CD4-positive, alpha-beta memory T cell (primary cell): ENCODE measurements at regions of chr5 and their contacts with region 1.

Region 1: DNA sequence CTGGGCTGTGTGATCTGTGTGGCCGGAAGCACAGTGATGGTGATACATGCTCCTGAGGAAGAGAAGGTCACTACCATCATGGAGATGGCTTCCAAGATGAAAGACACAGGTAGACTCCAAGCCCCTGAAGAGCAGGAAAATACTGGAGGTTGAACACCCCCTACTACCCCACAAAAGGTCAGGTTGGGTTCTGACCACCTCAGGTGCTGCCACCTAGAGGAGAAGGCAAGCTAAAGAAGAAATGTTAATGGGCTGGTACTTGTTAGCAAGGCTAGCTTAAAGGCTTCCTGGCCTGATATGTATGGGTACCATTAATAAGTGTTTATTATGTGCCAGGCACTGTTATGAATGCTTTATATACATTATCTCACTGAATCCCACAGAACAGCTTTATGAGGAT is 11.7 kb downstream of the NIPAL4 start:
- DNase-seq: no peak
- H3K4me3 ChIP-seq: no peak overlapping the region
- H3K4me3 Mint-ChIP-seq: no peak overlapping the region
- H3K27ac ChIP-seq: no peak overlapping the region
- H3K27ac Mint-ChIP-seq: no peak overlapping the region
- H3K4me1 ChIP-seq: no peaks in the 10 kb centered on the region
- H3K4me1 Mint-ChIP-seq: peaks cover under 1 to 4% (median 4%) of the 10 kb centered on the region in 4 donors
- H3K27me3 ChIP-seq: no peaks in the 10 kb centered on the region
- H3K27me3 Mint-ChIP-seq: no peaks in the 10 kb centered on the region

Region 2: DNA sequence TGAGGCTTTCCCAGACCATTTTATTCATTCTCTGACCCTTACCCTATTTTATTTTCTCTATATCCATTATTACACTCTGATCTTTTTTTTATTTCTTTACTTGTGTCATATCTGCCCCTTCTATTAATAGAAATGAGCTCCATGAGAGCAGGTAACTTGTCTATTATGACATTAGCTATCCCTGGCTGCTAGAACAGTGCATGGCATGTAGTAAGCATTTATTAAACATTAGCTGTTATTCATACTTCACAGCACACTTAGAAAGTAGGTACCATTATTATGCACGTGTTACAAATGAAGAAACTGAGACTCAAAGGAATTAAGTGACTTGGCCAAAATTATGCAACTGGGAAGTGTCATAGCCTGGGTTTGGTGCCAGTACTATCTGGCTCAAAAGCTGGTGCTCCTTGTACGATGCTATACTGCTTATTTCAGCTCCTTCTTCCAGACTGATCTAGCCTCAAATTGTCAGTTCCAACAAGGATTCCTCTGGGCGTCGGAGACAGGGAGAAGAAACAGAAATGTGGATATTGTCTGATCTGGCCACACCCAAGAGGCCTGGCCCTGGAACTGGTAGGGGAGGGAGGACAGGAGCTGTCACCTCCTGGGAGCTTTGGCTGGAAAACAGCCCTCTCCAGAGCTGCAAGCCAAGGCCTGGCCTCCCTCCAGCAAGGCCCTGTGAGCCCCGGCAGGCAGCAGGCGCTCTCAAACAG is 22.5 kb before region 1 on chr5:
- CTCF ChIA-PET with region 1: interaction called, 13 read pairs
- POLR2A ChIA-PET with region 1: no interaction called
- intact Hi-C with region 1: no loop called
- DNase-seq: no peak
- H3K4me3 ChIP-seq: no peak overlapping the region
- H3K4me3 Mint-ChIP-seq: no peak overlapping the region
- H3K27ac ChIP-seq: no peak overlapping the region
- H3K27ac Mint-ChIP-seq: no peak overlapping the region
- H3K4me1 ChIP-seq: no peaks in the 10 kb centered on the region
- H3K4me1 Mint-ChIP-seq: no peaks in the 10 kb centered on the region
- H3K27me3 ChIP-seq: no peaks in the 10 kb centered on the region
- H3K27me3 Mint-ChIP-seq: no peaks in the 10 kb centered on the region

Region 3: GRCh38 chr5:157459715-157460599 is 11.8 kb before region 1 on chr5 and contains the start of gene NIPAL4:
- CTCF ChIA-PET with region 1: interaction called, 34 read pairs
- POLR2A ChIA-PET with region 1: no interaction called
- intact Hi-C with region 1: no loop called
- DNase-seq: peak; percentile 11 to 47 (median 19)
- H3K4me3 ChIP-seq: peak within 1 kb of the TSS; percentile 28 to 43
- H3K4me3 Mint-ChIP-seq: peak within 1 kb of the TSS; percentile 74 to 83 (median 81)
- H3K27ac ChIP-seq: no peak within 1 kb of the TSS
- H3K27ac Mint-ChIP-seq: peak within 1 kb of the TSS in 2 of 7 donors; percentile 37 to 72
- H3K4me1 ChIP-seq: peaks cover 11% of the 10 kb centered on the region
- H3K4me1 Mint-ChIP-seq: peaks cover 16 to 26% (median 24%) of the 10 kb centered on the region in 4 donors
- H3K27me3 ChIP-seq: no peaks in the 10 kb centered on the region
- H3K27me3 Mint-ChIP-seq: peaks cover 8 to 9% of the 10 kb centered on the region in 2 donors
- total RNA-seq, gene NIPAL4: not detected

Region 4: GRCh38 chr5:157486221-157486681 is 14.5 kb after region 1 on chr5:
- CTCF ChIA-PET with region 1: interaction called, 27 read pairs
- POLR2A ChIA-PET with region 1: interaction called, 3 read pairs
- intact Hi-C with region 1: no loop called
- DNase-seq: no peak
- H3K4me3 ChIP-seq: no peak overlapping the region
- H3K4me3 Mint-ChIP-seq: no peak overlapping the region
- H3K27ac ChIP-seq: no peak overlapping the region
- H3K27ac Mint-ChIP-seq: peak overlapping the region; percentile 36 to 95 (median 83)
- H3K4me1 ChIP-seq: peaks cover 25% of the 10 kb centered on the region
- H3K4me1 Mint-ChIP-seq: peaks cover 25 to 35% (median 29%) of the 10 kb centered on the region in 4 donors
- H3K27me3 ChIP-seq: no peaks in the 10 kb centered on the region
- H3K27me3 Mint-ChIP-seq: no peaks in the 10 kb centered on the region

Region 5: DNA sequence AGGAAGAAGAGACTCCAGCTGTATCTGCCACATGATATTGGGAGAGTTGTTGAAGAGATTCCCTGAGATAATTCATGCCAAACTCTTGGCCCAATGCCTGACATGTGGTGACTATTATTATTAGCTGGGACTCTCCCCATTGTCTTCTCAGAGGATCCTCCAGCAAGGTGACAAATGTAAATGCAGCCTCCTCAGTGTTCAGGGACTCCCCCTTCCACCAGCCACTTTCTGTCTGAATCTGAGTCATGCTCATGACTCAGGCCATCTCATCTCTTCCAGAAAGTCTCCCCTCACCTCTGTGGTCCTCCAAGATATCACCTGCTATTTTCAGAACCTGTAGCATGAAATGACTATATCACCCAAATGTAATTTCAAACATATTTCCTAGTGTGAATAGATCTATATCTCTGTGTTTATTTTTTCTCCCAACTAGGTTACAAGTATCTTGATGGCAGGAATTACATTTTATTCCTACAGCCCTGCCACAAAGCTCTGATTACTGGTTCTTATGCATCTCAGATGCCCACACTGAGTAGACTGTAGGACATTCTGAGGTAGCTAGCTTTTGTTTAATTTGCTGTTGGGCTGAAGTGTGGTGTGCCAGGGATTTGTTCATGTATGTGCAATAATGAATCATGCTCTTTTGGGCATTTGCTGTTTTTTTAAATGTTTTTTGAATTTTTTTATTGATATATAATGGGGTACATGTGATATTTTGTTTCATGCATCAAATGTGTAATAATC is 1985.2 kb after region 1 on chr5:
- CTCF ChIA-PET with region 1: no interaction called
- POLR2A ChIA-PET with region 1: no interaction called
- intact Hi-C with region 1: no loop called
- DNase-seq: peak in 1 of 5 donors; percentile 53
- H3K4me3 ChIP-seq: no peak overlapping the region
- H3K4me3 Mint-ChIP-seq: no peak overlapping the region
- H3K27ac ChIP-seq: no peak overlapping the region
- H3K27ac Mint-ChIP-seq: peak overlapping the region in 2 of 7 donors; percentile 14 to 34
- H3K4me1 ChIP-seq: peaks cover 8% of the 10 kb centered on the region
- H3K4me1 Mint-ChIP-seq: peaks cover 15 to 30% (median 17%) of the 10 kb centered on the region in 4 donors
- H3K27me3 ChIP-seq: no peaks in the 10 kb centered on the region
- H3K27me3 Mint-ChIP-seq: peaks cover 4% of the 10 kb centered on the region in 2 donors